IMR-90 (cell line): ENCODE measurements at regions of chr2 and their contacts with region 1.

Region 1: DNA sequence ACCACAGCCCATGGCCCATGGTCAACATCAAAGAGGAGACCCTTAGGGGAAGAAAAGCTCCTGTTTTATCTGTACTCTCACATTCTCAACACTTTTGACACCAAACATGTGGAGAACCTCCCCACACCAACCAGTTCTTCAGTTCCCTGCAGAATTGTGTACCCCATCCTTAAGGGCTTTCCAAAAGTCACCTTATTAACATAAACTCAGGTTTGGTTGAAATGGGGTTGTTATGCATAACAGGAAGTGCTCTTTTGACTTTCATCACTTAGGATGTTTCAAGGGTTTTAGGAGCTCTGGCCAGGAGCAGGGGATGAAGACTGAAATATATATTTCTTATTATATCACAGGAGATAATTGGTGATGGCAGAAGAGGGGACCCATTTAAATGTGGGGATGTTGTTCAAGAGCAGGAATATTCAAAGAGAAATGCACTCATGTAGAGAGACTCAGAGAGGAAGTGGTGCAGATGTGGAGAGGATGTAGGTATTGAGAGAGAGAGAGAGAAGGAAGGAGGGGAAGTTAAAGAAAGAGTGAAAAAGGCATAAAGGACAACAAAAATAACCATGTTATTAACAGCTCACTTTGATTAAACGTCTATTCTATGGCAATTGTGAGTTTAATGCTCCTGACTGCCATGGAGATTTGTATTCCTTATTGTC is 35.2 kb downstream of the SP140L start:
- DNase-seq: no peak
- ATAC-seq: no peak
- H3K4me3 ChIP-seq: no peak overlapping the region
- H3K27ac ChIP-seq: no peak overlapping the region
- H3K4me1 ChIP-seq: no peaks in the 10 kb centered on the region
- H3K27me3 ChIP-seq: no peaks in the 10 kb centered on the region
- CTCF ChIP-seq: no peak
- POLR2A ChIP-seq: no peak
- RAD21 ChIP-seq: no peak

Region 2: GRCh38 chr2:230282936-230283335 is 79.2 kb before region 1 on chr2:
- CTCF ChIA-PET with region 1: no interaction called
- POLR2A ChIA-PET with region 1: no interaction called
- dilution Hi-C with region 1: no loop called
- in situ Hi-C with region 1: no loop called
- intact Hi-C with region 1: loop called (anchors 5 kb)
- DNase-seq: no peak
- ATAC-seq: no peak
- H3K4me3 ChIP-seq: no peak overlapping the region
- H3K27ac ChIP-seq: no peak overlapping the region
- H3K4me1 ChIP-seq: no peaks in the 10 kb centered on the region
- H3K27me3 ChIP-seq: no peaks in the 10 kb centered on the region
- CTCF ChIP-seq: no peak
- POLR2A ChIP-seq: no peak
- RAD21 ChIP-seq: no peak